Mammary epithelial cell (primary cell): ENCODE measurements at regions of chr19 and their contacts with region 1.

Region 1: GRCh38 chr19:55117636-55118391 is at the start of gene PPP1R12C:
- DNase-seq: peak; percentile 99
- H3K4me3 ChIP-seq: peak within 1 kb of the TSS; percentile 88 to 96 (median 92)
- H3K27ac ChIP-seq: peak within 1 kb of the TSS; percentile 58
- H3K4me1 ChIP-seq: peaks cover 18% of the 10 kb centered on the region
- H3K27me3 ChIP-seq: no peaks in the 10 kb centered on the region
- CTCF ChIP-seq: peak in 1 of 2 donors; percentile 7
- total RNA-seq, gene PPP1R12C: 29.8 to 74.8 TPM

Region 2: GRCh38 chr19:55068950-55069855 is 48.6 kb before region 1 on chr19:
- CTCF ChIA-PET with region 1: no interaction called
- dilution Hi-C with region 1: no loop called
- in situ Hi-C with region 1: no loop called
- intact Hi-C with region 1: loop called (anchors 2 kb)
- DNase-seq: peak; percentile 78
- H3K4me3 ChIP-seq: peak overlapping the region; percentile 7 to 46 (median 24)
- H3K27ac ChIP-seq: no peak overlapping the region
- H3K4me1 ChIP-seq: peaks cover 12% of the 10 kb centered on the region
- H3K27me3 ChIP-seq: no peaks in the 10 kb centered on the region
- CTCF ChIP-seq: no peak

Region 3: DNA sequence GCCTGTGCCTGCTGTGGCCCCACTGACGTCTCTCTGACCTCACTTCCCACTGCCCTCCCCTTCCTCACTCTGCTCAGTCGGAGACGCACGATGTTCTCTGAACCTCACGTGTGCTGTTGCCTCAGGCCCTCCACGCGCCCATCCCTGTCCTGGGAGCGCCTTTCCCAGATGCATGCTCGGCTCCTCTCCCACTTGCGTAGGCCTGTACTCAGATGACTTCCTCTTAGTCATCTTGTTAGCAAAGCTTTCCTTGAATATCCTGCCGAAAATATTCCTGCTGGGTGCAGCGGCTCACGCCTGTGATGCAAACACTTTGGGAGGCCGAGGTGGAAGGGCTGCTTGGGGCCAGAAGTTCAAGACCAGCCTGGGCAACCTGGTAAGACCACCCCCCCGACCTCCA is 71.6 kb after region 1 on chr19:
- CTCF ChIA-PET with region 1: no interaction called
- dilution Hi-C with region 1: loop called (anchors 5 kb)
- in situ Hi-C with region 1: no loop called
- intact Hi-C with region 1: no loop called
- DNase-seq: peak; percentile 100
- H3K4me3 ChIP-seq: no peak overlapping the region
- H3K27ac ChIP-seq: peak overlapping the region; percentile 87
- H3K4me1 ChIP-seq: peaks cover 9% of the 10 kb centered on the region
- H3K27me3 ChIP-seq: no peaks in the 10 kb centered on the region
- CTCF ChIP-seq: no peak

Region 4: DNA sequence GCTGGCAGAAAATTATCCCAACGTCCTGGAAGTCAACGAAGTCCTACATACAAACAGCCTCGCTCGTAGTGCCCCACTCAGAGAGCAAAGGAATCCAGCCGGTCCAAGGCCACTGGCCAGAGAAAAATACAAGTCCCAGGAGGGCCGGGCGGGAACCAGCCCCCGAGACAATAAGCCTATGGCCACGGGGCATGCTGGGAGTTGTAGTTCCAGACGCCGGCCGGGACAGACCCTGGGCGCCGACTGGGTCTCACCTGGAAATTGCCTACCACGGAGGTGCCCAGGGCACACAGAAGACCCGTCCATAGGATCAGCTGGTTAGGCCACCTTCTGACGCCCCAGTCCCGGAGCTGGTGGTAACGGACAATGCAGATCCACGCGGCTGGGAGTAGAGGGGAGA is 202.0 kb after region 1 on chr19:
- CTCF ChIA-PET with region 1: no interaction called
- dilution Hi-C with region 1: loop called (anchors 5 kb)
- in situ Hi-C with region 1: no loop called
- intact Hi-C with region 1: no loop called
- DNase-seq: no peak
- H3K4me3 ChIP-seq: no peak overlapping the region
- H3K27ac ChIP-seq: no peak overlapping the region
- H3K4me1 ChIP-seq: peaks cover 6% of the 10 kb centered on the region
- H3K27me3 ChIP-seq: no peaks in the 10 kb centered on the region
- CTCF ChIP-seq: no peak

Region 5: GRCh38 chr19:55476100-55476775 is 358.4 kb after region 1 on chr19 and contains the start of gene ZNF628:
- CTCF ChIA-PET with region 1: no interaction called
- dilution Hi-C with region 1: loop called (anchors 10 kb)
- in situ Hi-C with region 1: no loop called
- intact Hi-C with region 1: no loop called
- DNase-seq: peak; percentile 97
- H3K4me3 ChIP-seq: peak within 1 kb of the TSS; percentile 56 to 88 (median 66)
- H3K27ac ChIP-seq: peak within 1 kb of the TSS; percentile 75
- H3K4me1 ChIP-seq: peaks cover 25% of the 10 kb centered on the region
- H3K27me3 ChIP-seq: no peaks in the 10 kb centered on the region
- CTCF ChIP-seq: no peak
- total RNA-seq, gene ZNF628: 2.7 to 10.0 TPM

Region 6: DNA sequence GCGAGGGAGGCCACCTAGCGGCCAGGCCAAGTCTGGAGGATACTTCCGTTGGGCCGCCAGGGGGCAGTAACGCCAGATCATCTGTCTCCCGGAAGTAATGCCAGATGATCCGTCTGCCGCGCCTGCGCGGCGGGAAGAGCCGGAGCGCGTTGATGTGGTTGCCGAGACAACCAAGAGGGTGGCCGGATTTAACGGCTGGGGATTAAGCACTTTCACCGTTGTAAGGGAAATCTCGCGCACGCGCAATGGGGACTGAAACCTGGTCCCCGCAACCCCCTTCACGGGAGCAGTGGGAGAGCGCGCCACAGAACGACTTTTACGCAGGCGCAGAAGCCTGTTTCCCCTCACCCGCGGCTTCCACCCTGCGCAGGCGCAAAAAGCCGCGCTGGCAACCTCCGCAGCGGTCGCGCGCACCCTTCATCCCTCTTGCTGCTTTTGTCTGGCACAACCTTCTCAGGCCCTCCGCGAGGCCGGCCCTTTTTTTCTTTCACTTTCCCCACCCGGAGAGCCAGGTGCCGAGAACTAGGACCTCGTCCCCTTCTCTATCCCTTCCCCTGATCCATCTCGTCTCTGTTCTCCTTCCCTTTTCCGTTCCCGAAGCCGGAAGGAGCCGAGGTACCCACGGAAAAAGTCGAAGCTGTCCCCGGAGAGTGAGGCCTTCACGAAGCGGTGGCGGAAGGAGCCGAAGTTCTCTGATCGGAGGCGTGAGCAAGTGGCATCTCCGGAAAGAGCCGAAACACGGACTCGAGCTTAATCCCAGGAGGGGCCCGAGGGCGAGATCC is 536.1 kb after region 1 on chr19:
- CTCF ChIA-PET with region 1: no interaction called
- dilution Hi-C with region 1: no loop called
- in situ Hi-C with region 1: loop called in 1 of 2 experiments (anchors 25 kb)
- intact Hi-C with region 1: no loop called
- DNase-seq: peak; percentile 98
- H3K4me3 ChIP-seq: peak overlapping the region; percentile 46 to 67 (median 60)
- H3K27ac ChIP-seq: peak overlapping the region; percentile 90
- H3K4me1 ChIP-seq: peaks cover 17% of the 10 kb centered on the region
- H3K27me3 ChIP-seq: no peaks in the 10 kb centered on the region
- CTCF ChIP-seq: peak; percentile 99 to 100